ENCODE measurements at regions of chr2 and their contacts with region 1.

Region 1: GRCh38 chr2:224520064-224520463 is 65.1 kb downstream of the CUL3 start:
- DNase-seq: peak; percentile 60
- H3K4me3 Mint-ChIP-seq: no peak overlapping the region
- H3K27ac Mint-ChIP-seq: peak overlapping the region; percentile 83
- H3K4me1 Mint-ChIP-seq: peaks cover 43% of the 10 kb centered on the region
- H3K27me3 Mint-ChIP-seq: no peaks in the 10 kb centered on the region
- CTCF ChIP-seq: no peak

Region 2: DNA sequence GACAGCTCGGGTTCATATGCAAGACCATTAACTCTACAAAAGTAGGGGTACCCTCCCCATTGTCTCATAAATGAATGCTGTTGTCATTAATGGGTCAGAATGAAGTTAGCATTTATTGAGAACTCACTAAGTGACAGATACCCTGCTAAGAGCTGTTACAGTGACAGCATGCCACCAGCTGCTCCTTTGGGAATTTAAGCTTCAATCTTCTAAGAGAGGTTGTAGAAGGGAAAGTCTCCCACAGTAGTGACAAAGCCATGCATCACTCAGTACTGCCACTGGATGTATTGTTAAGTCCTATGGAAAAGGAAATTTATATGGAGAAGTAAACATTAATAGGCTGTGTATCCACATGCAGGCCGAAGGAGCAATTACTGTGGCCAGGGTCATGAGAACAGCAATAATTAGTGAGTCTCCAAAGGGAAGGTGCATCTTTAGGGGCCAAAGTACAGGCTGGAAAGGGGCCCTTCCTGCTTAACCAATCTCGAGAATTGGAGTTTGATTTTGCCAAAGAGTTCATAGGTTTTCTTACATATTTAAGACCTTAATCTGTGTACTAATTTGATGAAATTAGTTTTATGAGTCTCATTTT is 53.7 kb before region 1 on chr2:
- CTCF ChIA-PET with region 1: no interaction called
- POLR2A ChIA-PET with region 1: no interaction called
- intact Hi-C with region 1: no loop called
- DNase-seq: no peak
- H3K4me3 Mint-ChIP-seq: no peak overlapping the region
- H3K27ac Mint-ChIP-seq: no peak overlapping the region
- H3K4me1 Mint-ChIP-seq: no peaks in the 10 kb centered on the region
- H3K27me3 Mint-ChIP-seq: no peaks in the 10 kb centered on the region
- CTCF ChIP-seq: no peak

Region 3: DNA sequence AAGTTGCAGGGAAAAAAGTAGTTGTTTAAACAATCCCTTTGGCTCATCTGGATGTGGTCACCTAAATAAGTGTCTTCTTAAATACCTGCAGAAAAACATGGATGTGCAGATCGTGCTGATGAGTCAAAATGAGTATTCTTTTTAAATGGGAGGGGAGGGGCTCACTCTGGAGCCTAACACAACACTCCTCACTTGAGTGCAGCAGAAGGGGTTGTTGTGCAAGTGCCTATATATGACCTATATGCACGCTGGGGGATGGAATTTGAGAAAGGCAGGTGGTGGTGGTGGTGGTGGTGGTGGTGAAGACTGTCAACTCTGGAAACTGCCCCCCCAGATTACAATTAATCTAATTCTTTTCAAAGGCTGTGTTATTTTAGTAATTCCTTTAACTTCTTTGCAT is 40.2 kb before region 1 on chr2:
- CTCF ChIA-PET with region 1: no interaction called
- POLR2A ChIA-PET with region 1: interaction called, 11 read pairs
- intact Hi-C with region 1: no loop called
- DNase-seq: no peak
- H3K4me3 Mint-ChIP-seq: no peak overlapping the region
- H3K27ac Mint-ChIP-seq: no peak overlapping the region
- H3K4me1 Mint-ChIP-seq: peaks cover 7% of the 10 kb centered on the region
- H3K27me3 Mint-ChIP-seq: no peaks in the 10 kb centered on the region
- CTCF ChIP-seq: no peak

Region 4: GRCh38 chr2:224532931-224533330 is 12.9 kb after region 1 on chr2:
- CTCF ChIA-PET with region 1: interaction called, 5 read pairs
- POLR2A ChIA-PET with region 1: interaction called, 11 read pairs
- intact Hi-C with region 1: no loop called
- DNase-seq: no peak
- H3K4me3 Mint-ChIP-seq: no peak overlapping the region
- H3K27ac Mint-ChIP-seq: peak overlapping the region; percentile 11
- H3K4me1 Mint-ChIP-seq: peaks cover 28% of the 10 kb centered on the region
- H3K27me3 Mint-ChIP-seq: no peaks in the 10 kb centered on the region
- CTCF ChIP-seq: no peak

Region 5: GRCh38 chr2:225556461-225556860 is 1036.4 kb after region 1 on chr2:
- CTCF ChIA-PET with region 1: no interaction called
- POLR2A ChIA-PET with region 1: no interaction called
- intact Hi-C with region 1: no loop called
- DNase-seq: no peak
- H3K4me3 Mint-ChIP-seq: no peak overlapping the region
- H3K27ac Mint-ChIP-seq: no peak overlapping the region
- H3K4me1 Mint-ChIP-seq: no peaks in the 10 kb centered on the region
- H3K27me3 Mint-ChIP-seq: peaks cover 39% of the 10 kb centered on the region
- CTCF ChIP-seq: no peak